ENCODE measurements at regions of chr15 and their contacts with region 1.

Region 1: DNA sequence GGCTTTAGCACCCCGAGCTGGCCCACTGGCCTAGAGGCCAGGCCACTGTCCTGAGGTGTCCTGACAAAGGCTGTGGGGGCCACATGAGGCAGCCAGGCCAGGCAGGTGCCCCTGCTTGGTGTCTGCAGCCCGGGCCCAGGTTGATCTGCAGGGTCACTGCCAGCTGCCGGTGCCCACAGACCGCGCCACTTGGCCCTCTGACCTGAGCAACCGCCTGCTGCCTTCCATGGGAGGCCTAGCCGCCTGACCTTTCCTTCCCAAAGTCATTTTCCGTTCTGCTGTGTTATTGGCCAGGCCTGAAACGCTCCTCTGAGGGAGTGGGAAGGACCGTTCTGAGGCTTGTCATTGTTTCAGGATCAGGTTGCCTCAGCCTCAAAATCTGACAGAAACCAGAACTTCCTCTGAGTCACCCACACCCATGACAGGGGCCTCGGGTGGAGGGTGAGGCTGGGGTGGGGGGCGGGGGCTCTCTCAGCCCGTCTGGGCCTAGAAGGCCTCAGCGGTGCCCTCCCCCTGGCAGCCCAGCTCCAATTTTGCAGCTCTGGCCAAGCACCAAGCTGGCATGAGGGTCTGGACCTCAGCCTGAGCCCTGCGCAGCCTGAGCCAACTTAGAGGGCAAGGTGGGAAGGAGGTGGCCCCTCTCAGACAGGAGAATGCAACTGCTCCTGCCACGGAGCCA is 140.7 kb upstream of the MEF2A start:
- DNase-seq: peak in 4 of 10 donors; percentile 41 to 71 (median 48)
- ATAC-seq: peak; percentile 75 to 84
- H3K4me3 Mint-ChIP-seq: peak overlapping the region; percentile 69 to 92 (median 84)
- H3K27ac Mint-ChIP-seq: peak overlapping the region; percentile 91 to 100 (median 98)
- H3K4me1 Mint-ChIP-seq: peaks cover 42 to 85% (median 73%) of the 10 kb centered on the region in 4 donors
- H3K27me3 Mint-ChIP-seq: no peaks in the 10 kb centered on the region

Region 2: GRCh38 chr15:99197856-99198255 is 227.3 kb before region 1 on chr15:
- POLR2A ChIA-PET with region 1: no interaction called
- DNase-seq: no peak
- ATAC-seq: no peak
- H3K4me3 Mint-ChIP-seq: no peak overlapping the region
- H3K27ac Mint-ChIP-seq: peak overlapping the region in 1 of 10 donors; percentile 54
- H3K4me1 Mint-ChIP-seq: no peaks in the 10 kb centered on the region
- H3K27me3 Mint-ChIP-seq: peaks cover 0 to 1% (median 0%) of the 10 kb centered on the region in 5 donors

Region 3: GRCh38 chr15:99409097-99409473 is 16.0 kb before region 1 on chr15:
- POLR2A ChIA-PET with region 1: interaction called, 11 read pairs
- DNase-seq: peak in 4 of 10 donors; percentile 16 to 75 (median 38)
- ATAC-seq: peak; percentile 81 to 93
- H3K4me3 Mint-ChIP-seq: peak overlapping the region in 1 of 10 donors; percentile 4
- H3K27ac Mint-ChIP-seq: peak overlapping the region in 6 of 10 donors; percentile 25 to 71 (median 62)
- H3K4me1 Mint-ChIP-seq: peaks cover 13 to 34% (median 25%) of the 10 kb centered on the region in 4 donors
- H3K27me3 Mint-ChIP-seq: no peaks in the 10 kb centered on the region

Region 4: DNA sequence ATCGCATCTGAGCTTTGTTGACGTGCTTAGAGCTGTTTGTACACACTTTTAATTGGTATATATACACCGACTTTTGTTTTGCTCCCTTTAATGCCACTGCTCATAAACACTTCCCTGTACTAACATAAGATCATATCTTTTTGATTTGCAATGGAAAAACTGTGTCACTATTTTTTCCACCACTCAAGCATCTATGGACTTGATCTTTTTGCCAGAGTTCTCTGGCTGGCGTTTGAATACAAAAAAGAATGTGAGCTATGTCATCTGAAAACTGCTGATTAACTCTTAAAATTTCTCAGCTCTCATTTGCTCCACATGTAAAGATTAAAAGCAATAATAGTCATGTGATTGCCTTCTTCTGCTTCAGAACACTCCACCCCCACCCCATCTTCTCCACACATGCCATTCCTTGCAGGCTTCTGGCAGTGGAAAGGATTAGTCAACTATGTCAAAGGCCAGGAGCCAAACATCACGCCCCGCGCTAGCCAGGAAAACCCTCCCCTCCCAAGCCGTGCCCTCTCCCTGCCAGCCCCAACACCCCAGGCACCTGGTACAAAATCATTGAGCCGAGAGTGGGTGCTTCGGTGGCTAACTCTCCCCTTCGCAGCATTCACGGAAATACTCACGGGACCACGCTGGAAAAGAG is 17.3 kb after region 1 on chr15:
- POLR2A ChIA-PET with region 1: interaction called, 35 read pairs
- DNase-seq: no peak
- ATAC-seq: peak in 1 of 2 donors; percentile 16
- H3K4me3 Mint-ChIP-seq: peak overlapping the region in 6 of 10 donors; percentile 27 to 57 (median 43)
- H3K27ac Mint-ChIP-seq: peak overlapping the region; percentile 35 to 100 (median 88)
- H3K4me1 Mint-ChIP-seq: peaks cover 30 to 86% (median 82%) of the 10 kb centered on the region in 4 donors
- H3K27me3 Mint-ChIP-seq: no peaks in the 10 kb centered on the region

Region 5: DNA sequence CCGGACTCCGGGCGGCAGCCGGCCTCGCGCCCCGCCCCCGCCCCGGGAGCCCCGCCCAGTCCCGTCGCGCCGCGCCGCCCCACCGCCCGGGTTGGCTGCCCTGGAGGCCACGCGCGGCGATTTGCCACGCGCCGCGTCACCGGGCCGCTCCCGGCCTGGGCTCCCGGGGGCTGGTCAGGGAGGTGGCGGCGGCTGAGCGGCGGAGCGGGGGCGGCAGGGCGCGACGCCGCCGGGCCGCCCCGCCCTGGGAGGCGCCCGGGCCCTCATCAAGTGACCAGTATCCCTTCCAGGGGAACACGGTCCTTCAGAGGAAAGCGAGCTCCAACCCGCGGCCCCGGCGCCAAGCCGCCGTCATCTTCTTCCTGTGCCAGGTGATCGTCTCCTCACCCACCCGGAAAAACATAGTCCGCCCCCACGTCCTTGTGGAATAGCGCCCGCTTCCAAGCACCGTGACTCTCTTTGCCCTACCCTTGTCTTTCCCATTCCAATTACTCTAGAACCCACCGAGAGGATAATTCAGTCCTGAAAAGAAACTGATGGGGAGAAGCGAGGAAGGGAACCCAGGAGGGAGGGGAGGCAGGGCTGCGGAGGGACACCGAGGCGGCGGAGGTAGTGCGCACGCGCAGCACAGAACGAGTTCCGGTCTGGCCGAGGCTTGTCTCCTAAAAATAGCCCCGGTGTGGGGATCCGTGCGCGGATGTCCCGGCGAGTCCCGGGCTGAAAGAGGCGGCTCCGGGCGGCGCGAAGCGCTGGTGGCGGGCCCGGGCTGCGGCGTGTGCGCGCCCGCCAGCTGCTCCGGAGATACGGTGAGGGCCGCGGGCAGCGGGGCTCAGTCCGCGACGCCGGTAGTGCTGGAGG is 140.4 kb after region 1 on chr15 and contains the start of gene MEF2A:
- POLR2A ChIA-PET with region 1: interaction called, 16 read pairs
- DNase-seq: peak; percentile 80 to 96 (median 90)
- ATAC-seq: peak; percentile 70 to 76
- H3K4me3 Mint-ChIP-seq: peak within 1 kb of the TSS; percentile 91 to 99 (median 97)
- H3K27ac Mint-ChIP-seq: peak within 1 kb of the TSS; percentile 93 to 98 (median 96)
- H3K4me1 Mint-ChIP-seq: peaks cover 22 to 62% (median 56%) of the 10 kb centered on the region in 4 donors
- H3K27me3 Mint-ChIP-seq: no peaks in the 10 kb centered on the region
- polyA plus RNA-seq, gene MEF2A: 14.6 to 22.4 (median 14.7) TPM